Panc1 (cell line): ENCODE measurements at regions of chr6 and their contacts with region 1.

Region 1: DNA sequence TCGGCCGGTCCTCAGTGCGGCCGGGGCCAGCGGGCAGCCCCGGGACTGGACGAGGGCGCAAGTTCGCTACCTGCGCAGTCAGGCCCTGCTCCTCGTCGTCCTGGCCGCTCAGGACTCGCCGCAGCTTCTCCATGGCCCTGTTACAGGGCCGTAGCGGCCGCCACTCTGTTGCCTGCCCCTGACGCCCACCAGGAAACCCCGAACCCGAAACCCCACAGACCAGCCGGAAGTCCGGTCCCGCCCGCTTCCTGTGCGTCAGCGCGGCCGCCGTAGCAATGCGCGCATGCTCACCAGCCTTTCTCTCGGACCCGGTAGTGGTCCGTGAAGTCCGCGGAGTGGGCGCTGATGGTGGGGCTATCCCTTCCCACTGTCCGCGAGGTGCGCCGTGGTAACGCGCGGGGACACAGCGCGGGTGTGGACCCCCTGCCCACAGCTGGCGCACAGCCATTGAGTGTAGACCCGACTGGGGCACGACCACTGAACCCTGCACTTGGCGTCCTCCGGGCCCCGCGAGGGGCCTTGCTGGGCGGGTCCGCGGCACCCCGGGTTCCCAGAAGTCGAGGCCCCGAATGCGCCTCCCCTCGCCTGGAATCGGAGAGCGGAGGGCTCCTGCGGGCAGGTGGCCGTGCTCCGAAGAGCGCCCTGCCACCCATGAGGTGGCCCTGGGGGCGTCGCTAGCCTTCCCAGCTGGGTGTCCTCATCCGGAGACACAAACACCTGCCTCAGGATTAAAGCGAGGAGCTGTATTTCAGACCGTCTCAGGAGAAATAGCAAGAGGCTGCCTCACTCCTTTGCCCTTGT is at the start of gene SFT2D1:
- DNase-seq: peak; percentile 15
- ATAC-seq: peak; percentile 99
- H3K4me3 ChIP-seq: peak within 1 kb of the TSS; percentile 78 to 100
- H3K27ac ChIP-seq: peak within 1 kb of the TSS; percentile 97
- H3K4me1 ChIP-seq: peaks cover 5% of the 10 kb centered on the region; the same call in 1 of the 2 replicates
- H3K27me3 ChIP-seq: no peaks in the 10 kb centered on the region
- CTCF ChIP-seq: no peak
- total RNA-seq, gene SFT2D1: 54.1 TPM

Region 2: DNA sequence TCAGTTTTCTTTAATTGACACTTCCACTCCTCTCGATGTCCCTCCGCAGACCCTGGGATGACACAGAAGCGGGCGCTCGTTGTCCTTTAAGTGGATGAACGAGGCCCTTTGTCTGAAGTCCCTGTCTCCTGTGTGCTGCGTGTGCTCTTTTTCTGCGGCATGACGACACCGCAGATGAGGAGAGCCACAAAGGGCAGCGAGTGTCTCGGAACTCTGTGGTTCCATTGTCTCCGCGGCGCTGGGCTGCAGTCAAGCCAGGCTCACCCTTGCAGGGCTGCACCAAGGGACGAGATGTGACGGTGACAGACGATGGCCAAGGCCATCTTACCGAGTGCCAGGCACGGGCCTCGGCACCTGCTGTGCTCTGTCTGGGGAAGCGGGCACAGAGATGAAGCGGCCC is 44.9 kb before region 1 on chr6:
- CTCF ChIA-PET with region 1: no interaction called
- POLR2A ChIA-PET with region 1: no interaction called
- in situ Hi-C with region 1: no loop called
- intact Hi-C with region 1: no loop called
- DNase-seq: no peak
- ATAC-seq: no peak
- H3K4me3 ChIP-seq: no peak overlapping the region
- H3K27ac ChIP-seq: no peak overlapping the region
- H3K4me1 ChIP-seq: no peaks in the 10 kb centered on the region
- H3K27me3 ChIP-seq: peaks cover 9% of the 10 kb centered on the region
- CTCF ChIP-seq: no peak

Region 3: DNA sequence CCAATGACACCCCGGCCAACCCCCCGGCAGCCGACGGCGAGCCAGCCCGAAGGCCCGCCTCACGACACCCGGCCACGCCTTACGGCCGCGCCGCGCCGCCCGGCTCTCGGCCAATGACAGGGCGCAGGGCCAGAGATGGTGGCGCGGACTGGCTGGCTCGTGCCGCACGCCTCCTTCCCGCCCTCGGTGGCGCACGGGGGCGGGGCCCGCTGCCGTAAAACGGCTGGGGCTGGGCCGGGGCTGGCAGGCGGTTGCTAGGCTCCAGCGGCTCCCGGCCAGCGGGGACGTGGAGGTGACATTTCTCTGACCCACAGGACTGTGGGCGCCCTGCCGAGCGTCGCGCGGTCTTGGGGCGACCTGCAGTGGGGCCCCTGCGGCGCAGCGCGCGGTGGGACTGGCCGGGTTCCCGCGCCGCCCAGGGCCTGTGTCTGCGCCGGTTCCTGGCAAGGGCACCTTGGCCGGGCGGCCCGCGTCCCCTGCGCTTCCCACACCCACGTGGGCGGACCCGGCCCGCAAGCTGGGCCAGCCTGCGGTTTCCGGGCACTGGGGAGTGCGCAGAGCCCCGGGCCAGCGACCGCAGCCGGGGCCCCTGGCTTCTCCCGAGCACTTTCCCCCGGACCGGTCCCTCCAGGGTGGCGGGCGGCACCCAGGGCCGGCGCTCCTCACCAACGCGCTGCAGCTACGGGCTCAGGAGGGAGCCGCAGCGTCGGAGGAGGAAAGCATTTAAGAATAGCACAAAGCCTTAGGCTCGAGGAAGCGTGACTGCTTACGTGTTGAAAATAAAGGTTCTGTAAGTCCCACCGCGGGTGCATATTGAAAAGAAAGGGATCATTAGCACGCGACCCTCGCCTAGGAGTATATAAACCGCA is 40.6 kb after region 1 on chr6 and contains the start of gene MPC1:
- CTCF ChIA-PET with region 1: interaction called, 3 read pairs
- POLR2A ChIA-PET with region 1: no interaction called
- in situ Hi-C with region 1: no loop called
- intact Hi-C with region 1: loop called (anchors 5 kb)
- DNase-seq: peak; percentile 68
- ATAC-seq: peak; percentile 99
- H3K4me3 ChIP-seq: peak within 1 kb of the TSS; percentile 65 to 93
- H3K27ac ChIP-seq: peak within 1 kb of the TSS; percentile 62
- H3K4me1 ChIP-seq: no peaks in the 10 kb centered on the region
- H3K27me3 ChIP-seq: no peaks in the 10 kb centered on the region; the same call in 1 of the 2 replicates
- CTCF ChIP-seq: no peak
- total RNA-seq, gene MPC1: 7.0 TPM